GM10248 (cell line): ENCODE measurements at regions of chr2 and their contacts with region 1.

Region 1: GRCh38 chr2:30711646-30712085 is 95.6 kb downstream of the CAPN13 start:
- DNase-seq: peak; percentile 81
- CTCF ChIP-seq: peak; percentile 100

Region 2: GRCh38 chr2:30155889-30156658 is 555.6 kb before region 1 on chr2:
- CTCF ChIA-PET with region 1: interaction called, 90 read pairs
- POLR2A ChIA-PET with region 1: no interaction called
- DNase-seq: no peak
- CTCF ChIP-seq: no peak

Region 3: GRCh38 chr2:30208452-30208851 is 503.2 kb before region 1 on chr2:
- CTCF ChIA-PET with region 1: interaction called, 191 read pairs
- POLR2A ChIA-PET with region 1: no interaction called
- DNase-seq: peak; percentile 46
- CTCF ChIP-seq: peak; percentile 82

Region 4: DNA sequence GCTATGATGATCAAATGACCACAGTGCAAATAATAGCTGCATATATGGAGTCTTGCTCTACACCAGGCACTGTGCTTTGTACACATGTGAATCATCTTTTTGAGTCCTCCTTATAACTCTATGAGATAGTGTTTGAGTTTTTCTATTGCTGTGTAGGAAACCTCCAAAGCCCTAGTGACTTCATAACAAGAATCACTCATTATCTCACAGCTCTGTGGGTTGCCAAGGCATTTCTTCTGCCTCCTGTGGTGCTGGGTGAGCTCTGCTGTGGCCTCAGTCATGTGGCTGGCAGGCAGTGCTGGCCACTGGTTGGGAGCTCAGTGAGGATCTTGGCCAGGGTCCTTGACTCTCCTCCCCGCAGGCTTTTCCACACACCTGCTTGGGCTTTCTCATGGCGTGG is 57.8 kb before region 1 on chr2:
- CTCF ChIA-PET with region 1: interaction called, 16 read pairs
- POLR2A ChIA-PET with region 1: no interaction called
- DNase-seq: no peak
- CTCF ChIP-seq: no peak

Region 5: DNA sequence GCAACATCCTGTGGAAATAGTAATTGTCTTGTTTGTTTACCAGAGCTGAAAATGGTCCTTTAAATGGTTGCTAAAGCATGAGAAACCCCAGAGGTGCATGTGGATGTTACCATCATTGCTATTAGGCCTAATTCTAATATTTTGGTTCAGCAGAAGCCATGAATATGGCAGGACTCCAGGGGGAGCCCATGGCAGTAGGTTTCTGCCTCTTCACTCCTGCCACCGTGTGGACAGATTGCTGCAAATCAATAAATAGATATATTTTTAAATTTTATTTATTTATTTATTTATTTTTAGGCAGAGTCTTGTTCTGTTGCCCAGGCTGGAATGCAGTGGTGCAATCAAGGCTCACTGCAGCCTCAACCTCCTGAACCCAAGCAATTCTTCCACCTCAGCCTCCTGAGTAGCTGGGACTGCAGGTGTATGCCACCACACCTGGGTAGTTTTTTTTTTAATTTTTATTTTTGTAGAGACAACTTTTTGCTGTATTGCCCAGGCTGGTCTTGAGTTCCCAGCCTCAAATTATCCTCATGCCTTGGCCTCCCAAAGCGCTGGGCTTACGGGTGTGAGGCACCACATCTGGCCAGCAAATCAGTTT is 150.5 kb after region 1 on chr2:
- CTCF ChIA-PET with region 1: interaction called, 85 read pairs
- POLR2A ChIA-PET with region 1: no interaction called
- DNase-seq: peak; percentile 57
- CTCF ChIP-seq: peak; percentile 78

Region 6: DNA sequence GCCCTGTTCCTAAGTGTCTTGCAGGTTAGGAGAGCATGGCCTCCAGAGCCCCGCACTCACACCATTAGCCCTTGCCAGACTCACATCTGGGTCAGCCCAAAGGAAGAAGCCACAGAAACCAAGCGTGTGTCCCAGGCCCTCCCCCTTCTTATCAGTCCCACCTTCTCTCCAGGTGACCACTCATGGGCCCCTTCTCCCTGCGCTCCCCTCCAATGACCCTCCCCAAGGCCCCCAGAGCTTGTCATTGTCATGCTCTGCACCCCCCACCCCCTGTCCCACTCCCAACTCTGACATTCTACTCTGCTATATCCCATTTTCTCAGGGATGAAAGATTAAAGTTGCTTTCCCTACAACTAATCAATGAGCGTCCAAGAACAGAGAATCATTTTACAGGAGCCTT is 475.5 kb after region 1 on chr2:
- CTCF ChIA-PET with region 1: no interaction called
- POLR2A ChIA-PET with region 1: no interaction called
- DNase-seq: no peak
- CTCF ChIP-seq: no peak

Region 7: DNA sequence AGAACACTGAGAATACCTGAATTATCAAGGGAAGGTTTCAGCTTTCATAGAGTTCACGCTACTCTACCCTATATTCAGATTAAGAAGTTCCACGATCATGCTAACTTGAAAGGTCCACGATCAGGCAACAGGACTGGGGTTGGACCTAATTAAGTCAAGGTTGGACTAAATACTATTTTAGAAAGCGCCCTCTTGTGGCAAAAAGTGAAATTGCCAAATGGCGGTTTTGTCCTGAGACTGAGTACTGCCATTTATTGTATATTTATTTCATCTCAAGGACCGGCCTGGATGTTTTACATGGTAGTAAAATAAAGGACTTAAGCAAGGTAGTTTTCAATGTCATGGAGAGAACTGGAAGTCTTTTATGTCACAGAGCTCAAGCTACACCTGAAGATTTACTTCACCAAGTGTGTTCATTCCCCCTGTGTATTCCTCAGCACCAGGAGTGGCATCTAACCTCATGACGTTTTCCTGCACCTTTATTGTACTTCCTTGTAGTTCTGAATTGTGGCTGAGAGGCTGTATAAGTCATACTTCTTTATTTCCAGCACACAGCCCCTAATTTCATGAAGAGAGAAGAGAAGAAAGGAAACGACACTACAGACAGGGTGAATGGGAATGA is 812.3 kb after region 1 on chr2:
- CTCF ChIA-PET with region 1: interaction called, 22 read pairs
- POLR2A ChIA-PET with region 1: no interaction called
- DNase-seq: peak; percentile 21
- CTCF ChIP-seq: peak; percentile 70